ENCODE measurements at regions of chr7 and their contacts with region 1.

Region 1: GRCh38 chr7:25389489-25390106 is 161.3 kb upstream of the NPVF start:
- DNase-seq: peak; percentile 41
- ATAC-seq: peak; percentile 53
- H3K4me3 ChIP-seq: no peak overlapping the region
- H3K27ac ChIP-seq: no peak overlapping the region
- H3K4me1 ChIP-seq: no peaks in the 10 kb centered on the region
- H3K27me3 ChIP-seq: peaks cover 68% of the 10 kb centered on the region
- CTCF ChIP-seq: peak; percentile 59; the same call in 1 of the 2 replicates

Region 2: DNA sequence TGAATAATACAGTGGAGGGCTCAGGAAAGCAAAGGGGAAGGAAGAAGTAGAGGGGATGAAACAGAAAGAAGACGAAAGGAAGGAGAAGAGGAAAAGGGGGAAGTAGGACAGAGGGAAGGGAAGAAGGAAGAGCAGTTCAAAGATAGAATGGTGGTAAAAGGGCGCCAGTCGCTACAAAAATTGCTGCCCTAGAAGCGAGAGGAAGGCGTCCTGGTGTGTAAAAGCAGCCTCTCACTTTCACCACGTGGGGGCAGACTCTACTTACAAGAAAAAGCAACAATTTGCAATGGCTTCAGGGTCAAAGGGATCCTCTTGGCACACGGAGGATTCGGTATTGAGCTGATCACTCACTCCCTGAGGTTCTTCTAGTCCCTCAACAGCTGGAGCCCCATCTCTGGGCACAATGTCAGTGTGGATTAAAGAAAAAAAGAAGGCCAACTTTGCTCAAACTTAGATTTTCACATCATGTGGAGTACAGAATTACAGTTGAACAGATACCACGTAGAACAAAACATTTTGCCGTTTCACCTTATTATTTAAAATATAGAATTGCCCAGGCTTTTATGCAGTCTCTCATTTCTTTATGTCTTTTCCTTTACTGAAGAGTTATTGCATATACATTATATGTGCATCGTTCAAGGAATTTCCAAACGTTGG is 129.9 kb before region 1 on chr7:
- CTCF ChIA-PET with region 1: interaction called, 4 read pairs
- POLR2A ChIA-PET with region 1: no interaction called
- intact Hi-C with region 1: loop called (anchors 1 kb)
- DNase-seq: peak; percentile 66
- ATAC-seq: peak; percentile 78
- H3K4me3 ChIP-seq: no peak overlapping the region
- H3K27ac ChIP-seq: no peak overlapping the region
- H3K4me1 ChIP-seq: no peaks in the 10 kb centered on the region
- H3K27me3 ChIP-seq: peaks cover 54% of the 10 kb centered on the region
- CTCF ChIP-seq: peak; percentile 77